Heart right ventricle (tissue), 16 donors: ENCODE measurements at regions of chr20 and their contacts with region 1.

Region 1: GRCh38 chr20:14307956-14308355 is 29.5 kb downstream of the FLRT3 start:
- DNase-seq: no peak
- ATAC-seq: no peak
- H3K4me3 ChIP-seq: no peak overlapping the region
- H3K27ac ChIP-seq: no peak overlapping the region
- H3K4me1 ChIP-seq: no peaks in the 10 kb centered on the region
- H3K27me3 ChIP-seq: no peaks in the 10 kb centered on the region
- CTCF ChIP-seq: no peak

Region 2: GRCh38 chr20:14295238-14295637 is 12.7 kb before region 1 on chr20:
- intact Hi-C with region 1: loop called in 1 of 10 experiments (anchors 1 kb)
- DNase-seq: no peak
- ATAC-seq: no peak
- H3K4me3 ChIP-seq: no peak overlapping the region
- H3K27ac ChIP-seq: no peak overlapping the region
- H3K4me1 ChIP-seq: peaks cover 0 to 6% (median 0%) of the 10 kb centered on the region in 9 donors
- H3K27me3 ChIP-seq: no peaks in the 10 kb centered on the region
- CTCF ChIP-seq: no peak

Region 3: DNA sequence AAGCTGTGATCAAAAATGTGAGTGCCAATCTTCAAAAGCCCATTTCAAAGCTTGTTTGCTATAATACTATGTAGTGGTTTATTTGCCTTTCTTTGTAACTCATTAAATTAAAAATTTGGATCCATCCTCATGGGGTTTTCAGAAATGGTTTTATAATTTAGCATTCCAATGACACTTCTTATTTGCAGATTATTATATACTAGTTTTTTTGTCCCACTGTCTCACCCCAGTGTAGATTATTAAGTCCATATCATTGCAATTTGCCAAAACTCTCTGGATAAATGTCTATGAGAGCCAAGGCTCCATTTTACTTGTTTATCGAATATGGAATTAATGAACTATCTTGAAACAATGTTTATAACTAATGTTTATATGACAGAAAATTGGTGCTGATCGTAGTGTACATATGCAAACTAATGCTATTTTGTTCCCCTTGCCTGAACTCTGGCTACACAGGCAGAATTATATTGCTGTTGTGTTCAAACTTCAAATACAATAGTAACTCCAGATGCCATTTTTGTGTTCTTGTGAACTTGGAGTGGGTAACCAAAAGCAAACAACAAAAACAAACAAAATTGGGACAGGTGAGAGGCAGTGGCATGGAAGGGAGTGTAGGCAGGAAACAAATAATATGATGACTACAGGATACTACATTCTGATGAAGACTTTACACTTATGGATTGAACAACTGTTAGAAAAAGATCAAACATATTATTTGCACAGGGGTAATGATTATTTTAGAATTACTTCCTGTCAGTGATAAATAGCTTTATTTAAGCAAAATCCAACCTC is 336.5 kb after region 1 on chr20:
- intact Hi-C with region 1: no loop called
- DNase-seq: no peak
- ATAC-seq: no peak
- H3K4me3 ChIP-seq: no peak overlapping the region
- H3K27ac ChIP-seq: no peak overlapping the region
- H3K4me1 ChIP-seq: no peaks in the 10 kb centered on the region
- H3K27me3 ChIP-seq: no peaks in the 10 kb centered on the region
- CTCF ChIP-seq: no peak